CD4-positive, alpha-beta memory T cell (primary cell): ENCODE measurements at regions of chr17 and their contacts with region 1.

Region 1: GRCh38 chr17:42997984-42998938 is at the start of gene RPL27:
- DNase-seq: peak; percentile 95 to 99 (median 99)
- H3K4me3 ChIP-seq: peak within 1 kb of the TSS; percentile 79 to 94
- H3K4me3 Mint-ChIP-seq: peak within 1 kb of the TSS; percentile 94 to 98 (median 96)
- H3K27ac ChIP-seq: peak within 1 kb of the TSS; percentile 99
- H3K27ac Mint-ChIP-seq: peak within 1 kb of the TSS; percentile 96 to 99 (median 99)
- H3K4me1 ChIP-seq: peaks cover 22% of the 10 kb centered on the region
- H3K4me1 Mint-ChIP-seq: peaks cover 16 to 36% (median 24%) of the 10 kb centered on the region in 4 donors
- H3K27me3 ChIP-seq: no peaks in the 10 kb centered on the region
- H3K27me3 Mint-ChIP-seq: peaks cover 0 to 2% of the 10 kb centered on the region in 2 donors
- total RNA-seq, gene RPL27: 1,574 to 1,622 TPM

Region 2: DNA sequence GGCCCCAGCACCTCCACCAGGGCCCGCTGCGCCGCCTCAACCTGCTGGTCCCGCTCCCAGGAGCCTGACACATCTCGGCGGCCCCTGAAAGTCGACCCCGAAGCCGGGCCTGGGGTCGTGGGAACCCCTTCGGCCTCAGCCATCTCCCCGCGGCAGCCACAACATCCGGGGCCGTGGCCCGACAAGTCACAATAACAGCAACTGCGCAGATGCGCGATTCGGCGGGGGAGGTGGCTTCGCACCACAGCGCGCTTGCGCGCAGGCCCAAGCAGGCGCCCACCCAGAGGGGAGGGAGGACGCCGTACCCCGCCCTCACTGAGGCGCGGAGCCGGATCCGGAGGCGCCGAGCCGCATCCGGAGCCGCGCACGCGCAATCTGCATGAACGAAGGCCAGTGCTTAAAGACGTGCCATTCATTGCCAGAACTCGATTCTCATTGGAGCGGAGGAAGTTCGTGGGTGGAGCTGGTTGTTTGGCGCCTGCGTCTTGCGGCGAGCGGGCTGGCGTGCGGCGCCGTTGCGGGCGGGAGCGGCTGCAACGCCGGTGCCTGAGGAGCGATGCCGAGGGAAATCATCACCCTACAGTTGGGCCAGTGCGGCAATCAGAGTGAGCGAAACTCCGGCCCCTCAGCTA is 389.0 kb before region 1 on chr17 and contains the starts of genes RETREG3 and TUBG1:
- CTCF ChIA-PET with region 1: no interaction called
- POLR2A ChIA-PET with region 1: interaction called, 11 read pairs
- intact Hi-C with region 1: no loop called
- DNase-seq: peak; percentile 98 to 100 (median 100)
- H3K4me3 ChIP-seq: peak within 1 kb of the TSS; percentile 87 to 92
- H3K4me3 Mint-ChIP-seq: peak within 1 kb of the TSS; percentile 99 to 100 (median 100)
- H3K27ac ChIP-seq: peak within 1 kb of the TSS; percentile 85
- H3K27ac Mint-ChIP-seq: peak within 1 kb of the TSS; percentile 90 to 100 (median 99)
- H3K4me1 ChIP-seq: peaks cover 47% of the 10 kb centered on the region
- H3K4me1 Mint-ChIP-seq: peaks cover 25 to 55% (median 40%) of the 10 kb centered on the region in 4 donors
- H3K27me3 ChIP-seq: no peaks in the 10 kb centered on the region
- H3K27me3 Mint-ChIP-seq: no peaks in the 10 kb centered on the region
- total RNA-seq, gene RETREG3: 128 to 134 TPM
- total RNA-seq, gene TUBG1: 13.6 to 16.5 TPM

Region 3: GRCh38 chr17:42819944-42820535 is 178.2 kb before region 1 on chr17:
- CTCF ChIA-PET with region 1: interaction called, 3 read pairs
- POLR2A ChIA-PET with region 1: interaction called, 12 read pairs
- intact Hi-C with region 1: loop called (anchors 2 kb)
- DNase-seq: peak; percentile 46 to 66 (median 49)
- H3K4me3 ChIP-seq: no peak overlapping the region
- H3K4me3 Mint-ChIP-seq: peak overlapping the region in 1 of 8 donors; percentile 26
- H3K27ac ChIP-seq: no peak overlapping the region
- H3K27ac Mint-ChIP-seq: peak overlapping the region; percentile 18 to 65 (median 36)
- H3K4me1 ChIP-seq: peaks cover 15% of the 10 kb centered on the region
- H3K4me1 Mint-ChIP-seq: peaks cover 16 to 41% (median 25%) of the 10 kb centered on the region in 4 donors
- H3K27me3 ChIP-seq: no peaks in the 10 kb centered on the region
- H3K27me3 Mint-ChIP-seq: no peaks in the 10 kb centered on the region

Region 4: GRCh38 chr17:42980398-42981397 is 17.6 kb before region 1 on chr17 and contains the start of gene RUNDC1:
- CTCF ChIA-PET with region 1: interaction called, 7 read pairs
- POLR2A ChIA-PET with region 1: interaction called, 41 read pairs
- intact Hi-C with region 1: loop called (anchors 1 kb)
- DNase-seq: peak; percentile 86 to 92 (median 88)
- H3K4me3 ChIP-seq: peak within 1 kb of the TSS; percentile 69 to 75
- H3K4me3 Mint-ChIP-seq: peak within 1 kb of the TSS; percentile 94 to 100 (median 97)
- H3K27ac ChIP-seq: peak within 1 kb of the TSS; percentile 77
- H3K27ac Mint-ChIP-seq: peak within 1 kb of the TSS; percentile 89 to 99 (median 98)
- H3K4me1 ChIP-seq: peaks cover 23% of the 10 kb centered on the region
- H3K4me1 Mint-ChIP-seq: peaks cover 21 to 39% (median 30%) of the 10 kb centered on the region in 4 donors
- H3K27me3 ChIP-seq: no peaks in the 10 kb centered on the region
- H3K27me3 Mint-ChIP-seq: no peaks in the 10 kb centered on the region
- total RNA-seq, gene RUNDC1: 24.1 to 25.5 TPM

Region 5: DNA sequence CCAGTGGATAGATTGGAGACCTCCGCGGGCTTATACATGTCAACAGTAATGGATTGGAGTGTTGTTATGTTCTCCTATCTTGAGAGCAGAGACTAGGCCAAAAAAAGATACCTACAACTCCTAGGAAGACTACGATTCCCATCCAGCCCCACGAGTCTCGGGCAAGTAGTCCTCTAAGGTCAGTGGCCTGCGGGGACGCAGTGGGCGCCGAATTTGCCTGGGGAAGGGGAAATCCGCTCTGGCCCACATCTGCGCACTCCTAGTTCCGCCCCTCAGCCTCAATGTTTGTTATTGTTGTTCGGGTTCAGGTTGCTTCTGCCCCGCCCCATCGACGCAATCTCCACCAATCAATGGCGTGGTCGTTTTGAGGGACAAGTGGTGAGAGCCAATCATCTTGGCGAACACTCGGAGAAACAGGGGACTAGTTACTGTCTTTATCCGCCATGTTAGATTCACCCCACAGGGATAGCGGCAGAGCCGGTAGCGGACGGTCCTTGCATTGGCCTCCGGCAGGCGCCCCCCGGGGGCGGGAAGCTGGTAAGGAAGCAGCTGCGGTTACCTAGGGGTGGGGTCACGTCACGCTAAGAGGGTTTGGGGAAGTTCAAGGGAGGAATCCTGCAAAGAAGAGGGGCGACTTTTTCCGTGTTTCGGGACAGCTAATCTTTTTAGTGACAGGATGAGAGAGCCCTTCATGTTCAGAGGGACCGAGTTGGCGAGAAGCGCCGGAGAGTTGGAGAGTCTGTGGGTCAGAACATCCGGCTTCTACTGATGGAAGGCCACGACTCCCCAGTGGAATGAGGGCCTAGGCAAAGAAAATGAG is 172.7 kb after region 1 on chr17 and contains the start of gene NBR1:
- CTCF ChIA-PET with region 1: interaction called, 3 read pairs
- POLR2A ChIA-PET with region 1: interaction called, 22 read pairs
- intact Hi-C with region 1: loop called (anchors 1 kb)
- DNase-seq: peak; percentile 97 to 99 (median 97)
- H3K4me3 ChIP-seq: peak within 1 kb of the TSS; percentile 80 to 85
- H3K4me3 Mint-ChIP-seq: no peak within 1 kb of the TSS
- H3K27ac ChIP-seq: peak within 1 kb of the TSS; percentile 99
- H3K27ac Mint-ChIP-seq: no peak within 1 kb of the TSS
- H3K4me1 ChIP-seq: peaks cover 40% of the 10 kb centered on the region
- H3K4me1 Mint-ChIP-seq: peaks cover 16 to 36% (median 23%) of the 10 kb centered on the region in 4 donors
- H3K27me3 ChIP-seq: no peaks in the 10 kb centered on the region
- H3K27me3 Mint-ChIP-seq: no peaks in the 10 kb centered on the region
- total RNA-seq, gene NBR1: 90.3 to 93.2 TPM

Region 6: DNA sequence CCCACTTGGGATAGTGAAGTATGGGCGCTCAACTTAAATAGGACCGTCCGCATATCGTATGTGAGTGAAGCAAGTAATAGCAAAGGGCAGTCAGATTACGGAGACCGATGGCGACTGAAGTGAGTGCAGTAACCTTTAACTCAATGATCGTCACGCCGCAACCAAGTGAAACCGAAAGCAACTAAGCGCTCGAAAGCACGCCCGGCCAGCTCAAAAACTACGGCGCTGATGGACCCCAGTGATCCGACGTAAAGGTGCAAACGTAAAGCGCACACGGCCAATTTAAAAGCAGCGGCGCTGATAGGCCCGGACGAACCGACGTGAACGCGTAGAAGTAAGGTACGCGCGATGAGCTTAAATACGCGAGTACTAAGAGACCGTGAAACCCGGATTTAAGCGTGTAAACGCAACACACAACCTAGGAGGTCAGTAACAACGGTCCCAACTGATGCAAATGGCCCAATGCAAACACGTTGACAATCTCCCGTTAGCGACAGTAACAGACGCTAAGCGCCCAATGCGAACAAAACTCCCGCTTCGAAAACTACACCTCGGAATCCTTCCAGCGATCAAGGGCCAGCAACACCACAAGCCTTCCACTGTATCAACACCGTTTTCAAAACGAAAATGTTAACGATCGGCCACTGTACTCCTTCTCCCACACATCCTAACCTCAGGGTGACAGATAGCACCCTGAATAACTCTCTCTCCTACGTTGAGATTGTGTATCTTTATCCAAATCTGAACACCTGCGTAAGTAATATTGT is 362.7 kb after region 1 on chr17:
- CTCF ChIA-PET with region 1: interaction called, 5 read pairs
- POLR2A ChIA-PET with region 1: interaction called, 69 read pairs
- intact Hi-C with region 1: loop called (anchors 2 kb)
- DNase-seq: peak; percentile 90 to 98 (median 93)
- H3K4me3 ChIP-seq: peak overlapping the region; percentile 68 to 77
- H3K4me3 Mint-ChIP-seq: peak overlapping the region; percentile 90 to 99 (median 94)
- H3K27ac ChIP-seq: peak overlapping the region; percentile 93
- H3K27ac Mint-ChIP-seq: peak overlapping the region; percentile 97 to 100 (median 99)
- H3K4me1 ChIP-seq: peaks cover 17% of the 10 kb centered on the region
- H3K4me1 Mint-ChIP-seq: peaks cover 14 to 35% (median 24%) of the 10 kb centered on the region in 4 donors
- H3K27me3 ChIP-seq: no peaks in the 10 kb centered on the region
- H3K27me3 Mint-ChIP-seq: no peaks in the 10 kb centered on the region

Region 7: GRCh38 chr17:43483674-43484372 is 485.6 kb after region 1 on chr17 and contains the start of gene DHX8:
- CTCF ChIA-PET with region 1: interaction called, 14 read pairs
- POLR2A ChIA-PET with region 1: interaction called, 14 read pairs
- intact Hi-C with region 1: loop called (anchors 2 kb)
- DNase-seq: peak; percentile 97 to 99 (median 98)
- H3K4me3 ChIP-seq: peak within 1 kb of the TSS; percentile 84 to 98
- H3K4me3 Mint-ChIP-seq: peak within 1 kb of the TSS; percentile 96 to 100 (median 100)
- H3K27ac ChIP-seq: peak within 1 kb of the TSS; percentile 78
- H3K27ac Mint-ChIP-seq: peak within 1 kb of the TSS; percentile 93 to 100 (median 99)
- H3K4me1 ChIP-seq: peaks cover 25% of the 10 kb centered on the region
- H3K4me1 Mint-ChIP-seq: peaks cover 17 to 39% (median 29%) of the 10 kb centered on the region in 4 donors
- H3K27me3 ChIP-seq: no peaks in the 10 kb centered on the region
- H3K27me3 Mint-ChIP-seq: peaks cover 0 to 1% of the 10 kb centered on the region in 2 donors
- total RNA-seq, gene DHX8: 75.8 to 78.2 TPM